ENCODE measurements at regions of chr18 and their contacts with region 1.

Region 1: GRCh38 chr18:35535297-35535696 is 37.5 kb upstream of the INO80C start:
- DNase-seq: no peak
- ATAC-seq: no peak
- H3K4me3 ChIP-seq: no peak overlapping the region
- H3K4me3 Mint-ChIP-seq: no peak overlapping the region
- H3K27ac ChIP-seq: no peak overlapping the region
- H3K27ac Mint-ChIP-seq: no peak overlapping the region
- H3K4me1 ChIP-seq: no peaks in the 10 kb centered on the region
- H3K4me1 Mint-ChIP-seq: no peaks in the 10 kb centered on the region
- H3K27me3 ChIP-seq: no peaks in the 10 kb centered on the region
- H3K27me3 Mint-ChIP-seq: peaks cover 12% of the 10 kb centered on the region
- CTCF ChIP-seq: no peak

Region 2: DNA sequence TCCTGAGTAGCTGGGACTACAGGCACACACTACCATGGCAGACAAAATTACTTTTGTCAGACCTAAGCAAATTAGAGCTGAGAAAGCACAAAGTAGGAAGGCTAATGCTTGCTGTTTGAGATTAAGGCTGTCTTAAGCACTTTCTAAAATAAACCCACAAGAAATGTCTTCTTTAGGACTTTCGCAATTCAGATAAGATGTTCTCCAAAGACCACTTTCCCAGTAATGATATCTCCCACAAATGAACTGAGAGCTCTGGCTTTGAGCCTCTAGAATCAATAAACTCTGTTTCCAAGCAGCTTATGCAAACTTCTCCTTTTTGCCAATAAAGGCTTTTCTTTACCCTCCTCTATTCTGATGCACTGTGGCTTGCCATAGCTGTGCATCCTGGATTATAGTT is 14.3 kb after region 1 on chr18:
- CTCF ChIA-PET with region 1: no interaction called
- POLR2A ChIA-PET with region 1: no interaction called
- intact Hi-C with region 1: loop called (anchors 1 kb)
- DNase-seq: no peak
- ATAC-seq: no peak
- H3K4me3 ChIP-seq: no peak overlapping the region
- H3K4me3 Mint-ChIP-seq: no peak overlapping the region
- H3K27ac ChIP-seq: no peak overlapping the region
- H3K27ac Mint-ChIP-seq: no peak overlapping the region
- H3K4me1 ChIP-seq: no peaks in the 10 kb centered on the region
- H3K4me1 Mint-ChIP-seq: no peaks in the 10 kb centered on the region
- H3K27me3 ChIP-seq: peaks cover 0 to 5% (median 0%) of the 10 kb centered on the region in 4 experiments
- H3K27me3 Mint-ChIP-seq: peaks cover 3% of the 10 kb centered on the region
- CTCF ChIP-seq: no peak

Region 3: GRCh38 chr18:35605686-35606417 is 70.6 kb after region 1 on chr18:
- CTCF ChIA-PET with region 1: no interaction called
- POLR2A ChIA-PET with region 1: no interaction called
- intact Hi-C with region 1: no loop called
- DNase-seq: no peak
- ATAC-seq: no peak
- H3K4me3 ChIP-seq: no peak overlapping the region
- H3K4me3 Mint-ChIP-seq: no peak overlapping the region
- H3K27ac ChIP-seq: no peak overlapping the region
- H3K27ac Mint-ChIP-seq: peak overlapping the region; percentile 33
- H3K4me1 ChIP-seq: peaks cover 18 to 35% of the 10 kb centered on the region in 2 donors
- H3K4me1 Mint-ChIP-seq: peaks cover 59% of the 10 kb centered on the region
- H3K27me3 ChIP-seq: no peaks in the 10 kb centered on the region
- H3K27me3 Mint-ChIP-seq: no peaks in the 10 kb centered on the region
- CTCF ChIP-seq: no peak

Measured in B cell (primary cell).